ENCODE measurements at regions of chr3 and their contacts with region 1.

Region 1: GRCh38 chr3:168213920-168214319 is 118.2 kb upstream of the GOLIM4 start:
- DNase-seq: no peak
- H3K4me3 ChIP-seq: peak overlapping the region; percentile 13
- H3K27ac ChIP-seq: no peak overlapping the region
- H3K4me1 ChIP-seq: peaks cover 11% of the 10 kb centered on the region
- H3K27me3 ChIP-seq: no peaks in the 10 kb centered on the region
- CTCF ChIP-seq: no peak

Region 2: GRCh38 chr3:168085541-168086115 is 128.3 kb before region 1 on chr3:
- intact Hi-C with region 1: no loop called
- DNase-seq: no peak
- H3K4me3 ChIP-seq: no peak overlapping the region
- H3K27ac ChIP-seq: no peak overlapping the region
- H3K4me1 ChIP-seq: peaks cover 94% of the 10 kb centered on the region
- H3K27me3 ChIP-seq: no peaks in the 10 kb centered on the region
- CTCF ChIP-seq: no peak

Region 3: GRCh38 chr3:168467115-168467714 is 253.3 kb after region 1 on chr3:
- intact Hi-C with region 1: loop called (anchors 2 kb)
- DNase-seq: no peak
- H3K4me3 ChIP-seq: no peak overlapping the region
- H3K27ac ChIP-seq: no peak overlapping the region
- H3K4me1 ChIP-seq: no peaks in the 10 kb centered on the region
- H3K27me3 ChIP-seq: no peaks in the 10 kb centered on the region
- CTCF ChIP-seq: peak; percentile 65

Region 4: GRCh38 chr3:168847291-168847883 is 633.5 kb after region 1 on chr3:
- intact Hi-C with region 1: loop called (anchors 5 kb)
- DNase-seq: no peak
- H3K4me3 ChIP-seq: no peak overlapping the region
- H3K27ac ChIP-seq: no peak overlapping the region
- H3K4me1 ChIP-seq: no peaks in the 10 kb centered on the region
- H3K27me3 ChIP-seq: peaks cover 29% of the 10 kb centered on the region
- CTCF ChIP-seq: peak; percentile 75